ENCODE measurements at regions of chr1 and their contacts with region 1.

Region 1: DNA sequence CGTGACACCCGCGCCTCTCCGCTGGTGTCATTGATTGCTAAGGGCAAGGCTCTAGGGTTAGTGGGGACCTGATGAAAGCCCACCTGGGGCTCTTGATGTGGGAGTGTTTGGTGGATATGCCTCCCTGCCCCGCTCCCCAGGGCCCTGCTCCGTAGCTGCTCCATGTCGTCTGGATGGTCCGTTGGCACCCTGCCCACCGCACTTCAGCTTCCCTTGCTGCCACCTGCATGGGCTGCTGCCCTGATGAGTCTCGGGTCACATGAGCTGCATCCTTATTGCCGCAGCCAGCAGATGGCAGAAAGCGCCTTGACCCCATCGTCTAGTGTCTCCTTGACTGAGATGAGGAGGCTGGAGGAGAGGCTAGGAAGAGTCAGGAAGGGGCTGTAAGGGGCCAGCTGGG is 439.4 kb downstream of the CAMTA1 start:
- DNase-seq: peak; percentile 22
- H3K4me3 Mint-ChIP-seq: no peak overlapping the region
- H3K27ac Mint-ChIP-seq: no peak overlapping the region
- H3K4me1 Mint-ChIP-seq: peaks cover 6% of the 10 kb centered on the region
- H3K27me3 Mint-ChIP-seq: no peaks in the 10 kb centered on the region
- CTCF ChIP-seq: peak; percentile 9

Region 2: GRCh38 chr1:7646981-7647901 is 422.6 kb after region 1 on chr1:
- CTCF ChIA-PET with region 1: interaction called, 4 read pairs
- POLR2A ChIA-PET with region 1: no interaction called
- intact Hi-C with region 1: loop called (anchors 5 kb)
- DNase-seq: peak; percentile 61
- H3K4me3 Mint-ChIP-seq: no peak overlapping the region
- H3K27ac Mint-ChIP-seq: no peak overlapping the region
- H3K4me1 Mint-ChIP-seq: no peaks in the 10 kb centered on the region
- H3K27me3 Mint-ChIP-seq: peaks cover 9% of the 10 kb centered on the region
- CTCF ChIP-seq: peak; percentile 96

Measured in MCF 10A (cell line).